ENCODE measurements at regions of chr22 and their contacts with region 1.

Region 1: DNA sequence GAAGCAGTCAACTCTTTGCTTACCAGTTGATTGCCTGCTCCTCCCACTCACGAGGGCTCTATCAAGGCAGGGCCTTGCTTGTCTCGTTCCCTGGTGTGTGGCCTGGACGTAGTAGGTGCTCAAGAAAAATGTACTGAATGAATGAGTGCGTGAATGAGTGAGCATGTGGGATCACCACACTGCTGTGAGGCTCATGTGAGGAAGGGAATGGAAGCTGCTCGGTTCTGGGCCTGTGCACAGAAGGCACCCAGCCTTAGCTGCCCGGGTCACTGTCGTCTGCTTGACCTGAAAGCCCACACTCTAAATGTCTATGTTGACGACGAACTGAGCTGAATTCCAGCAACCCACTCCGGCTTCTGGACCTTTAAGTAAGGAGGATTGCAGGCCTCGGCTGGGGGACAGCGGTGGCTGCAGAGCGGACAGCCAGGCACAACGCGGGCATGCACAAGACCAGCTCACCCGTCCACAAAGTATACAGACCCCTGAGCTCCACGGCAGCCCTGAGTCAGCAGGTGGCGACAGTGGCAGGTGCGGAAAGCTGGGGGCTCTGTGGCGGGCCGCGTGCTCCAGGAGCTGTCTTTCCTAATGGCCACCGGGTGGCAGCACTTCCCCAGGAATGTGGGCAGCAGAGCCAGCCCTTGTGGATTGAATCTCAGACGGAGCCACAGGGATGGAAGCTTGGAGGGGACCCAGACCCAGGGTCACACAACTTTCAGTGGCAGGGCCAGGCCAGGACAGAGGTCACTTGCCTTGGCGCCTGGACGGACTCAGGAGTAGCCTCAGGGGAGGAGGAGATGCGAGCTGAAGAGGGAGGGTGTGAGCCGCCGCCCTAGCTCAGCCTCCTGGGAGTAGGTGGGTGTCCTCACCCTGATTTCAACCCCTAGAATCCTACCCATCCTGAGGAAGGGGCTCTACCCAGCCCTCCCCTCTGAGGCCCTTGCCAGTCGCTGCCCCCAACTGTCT is 5.0 kb upstream of the PICK1 start:
- DNase-seq: peak; percentile 84 to 86
- H3K4me3 ChIP-seq: no peak overlapping the region
- H3K4me3 Mint-ChIP-seq: no peak overlapping the region
- H3K27ac Mint-ChIP-seq: no peak overlapping the region
- H3K4me1 ChIP-seq: no peaks in the 10 kb centered on the region
- H3K4me1 Mint-ChIP-seq: no peaks in the 10 kb centered on the region
- H3K27me3 ChIP-seq: no peaks in the 10 kb centered on the region
- H3K27me3 Mint-ChIP-seq: peaks cover 2% of the 10 kb centered on the region
- CTCF ChIP-seq: peak; percentile 90 to 97

Region 2: DNA sequence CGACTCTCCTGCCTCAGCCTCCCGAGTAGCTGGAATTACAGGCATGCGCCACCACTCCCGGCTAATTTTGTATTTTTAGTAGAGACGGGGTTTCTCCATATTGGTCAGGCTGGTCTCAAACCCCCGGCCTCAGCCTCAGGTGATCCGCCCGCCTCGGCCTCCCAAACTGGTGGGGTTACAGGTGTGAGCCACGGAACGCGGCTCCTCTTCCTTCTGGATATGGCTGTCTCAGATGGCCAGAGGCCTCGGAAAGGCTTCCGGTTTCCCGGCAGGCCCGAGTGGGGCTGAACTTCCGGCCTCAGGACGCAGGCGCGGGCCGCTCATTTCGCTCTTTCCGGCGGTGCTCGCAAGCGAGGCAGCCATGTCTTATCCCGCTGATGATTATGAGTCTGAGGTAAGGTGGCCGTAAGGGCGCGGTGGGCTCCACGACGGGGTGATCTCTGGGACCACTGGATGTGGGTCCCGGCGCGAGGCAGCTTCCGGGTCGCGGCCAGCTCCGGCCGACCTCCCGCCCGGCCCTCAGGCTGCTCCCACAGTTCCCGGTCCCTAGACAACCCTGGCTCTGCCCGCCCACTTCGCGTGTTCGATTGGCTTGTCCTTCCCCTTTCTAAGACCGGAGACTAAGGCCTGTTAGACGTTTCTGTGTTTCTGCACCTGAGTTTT is 203.0 kb before region 1 on chr22 and contains the start of gene EIF3L:
- CTCF ChIA-PET with region 1: no interaction called
- POLR2A ChIA-PET with region 1: no interaction called
- intact Hi-C with region 1: no loop called
- DNase-seq: peak; percentile 89 to 92
- H3K4me3 ChIP-seq: peak within 1 kb of the TSS; percentile 77
- H3K4me3 Mint-ChIP-seq: peak within 1 kb of the TSS; percentile 95
- H3K27ac Mint-ChIP-seq: peak within 1 kb of the TSS; percentile 91
- H3K4me1 ChIP-seq: no peaks in the 10 kb centered on the region
- H3K4me1 Mint-ChIP-seq: peaks cover 7% of the 10 kb centered on the region
- H3K27me3 ChIP-seq: no peaks in the 10 kb centered on the region
- H3K27me3 Mint-ChIP-seq: no peaks in the 10 kb centered on the region
- CTCF ChIP-seq: no peak
- total RNA-seq, gene EIF3L: 524 and 554 TPM in 2 replicates

Region 3: DNA sequence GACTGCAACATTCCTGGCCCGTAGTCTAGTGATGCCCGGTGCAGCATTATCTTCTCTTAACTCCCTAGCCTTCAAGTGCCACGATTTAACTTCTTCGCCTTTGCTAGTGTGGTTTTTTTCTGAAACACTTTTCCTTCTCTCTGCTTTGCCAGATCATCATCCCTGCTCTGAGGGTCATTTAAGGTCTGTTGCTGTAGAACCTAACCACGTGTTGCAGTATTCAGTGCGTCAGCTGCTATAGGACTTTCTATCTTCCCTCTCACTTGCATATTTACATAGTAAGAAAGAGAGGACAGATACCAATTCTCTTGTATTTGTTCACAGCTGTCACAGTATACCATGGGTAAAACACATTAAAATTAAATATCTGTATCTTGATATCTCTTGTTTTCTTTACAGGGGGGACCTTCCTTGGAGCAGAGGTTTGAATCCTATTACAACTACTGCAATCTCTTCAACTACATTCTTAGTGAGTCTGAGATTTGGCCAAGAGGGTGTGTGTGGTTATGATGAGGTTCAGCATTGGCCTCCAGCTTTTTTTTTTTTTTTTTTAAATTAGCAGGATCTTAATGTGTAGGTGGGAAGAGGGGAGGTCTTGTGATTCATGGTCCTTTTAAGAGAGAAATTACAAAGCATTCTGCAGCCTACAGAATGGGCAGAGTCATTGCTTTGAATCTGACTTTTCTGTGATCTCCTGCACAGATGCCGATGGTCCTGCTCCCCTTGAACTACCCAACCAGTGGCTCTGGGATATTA is 189.4 kb before region 1 on chr22:
- CTCF ChIA-PET with region 1: interaction called, 11 read pairs
- POLR2A ChIA-PET with region 1: no interaction called
- intact Hi-C with region 1: no loop called
- DNase-seq: no peak
- H3K4me3 ChIP-seq: no peak overlapping the region
- H3K4me3 Mint-ChIP-seq: no peak overlapping the region
- H3K27ac Mint-ChIP-seq: no peak overlapping the region
- H3K4me1 ChIP-seq: no peaks in the 10 kb centered on the region
- H3K4me1 Mint-ChIP-seq: peaks cover 14% of the 10 kb centered on the region
- H3K27me3 ChIP-seq: no peaks in the 10 kb centered on the region
- H3K27me3 Mint-ChIP-seq: no peaks in the 10 kb centered on the region
- CTCF ChIP-seq: no peak

Region 4: DNA sequence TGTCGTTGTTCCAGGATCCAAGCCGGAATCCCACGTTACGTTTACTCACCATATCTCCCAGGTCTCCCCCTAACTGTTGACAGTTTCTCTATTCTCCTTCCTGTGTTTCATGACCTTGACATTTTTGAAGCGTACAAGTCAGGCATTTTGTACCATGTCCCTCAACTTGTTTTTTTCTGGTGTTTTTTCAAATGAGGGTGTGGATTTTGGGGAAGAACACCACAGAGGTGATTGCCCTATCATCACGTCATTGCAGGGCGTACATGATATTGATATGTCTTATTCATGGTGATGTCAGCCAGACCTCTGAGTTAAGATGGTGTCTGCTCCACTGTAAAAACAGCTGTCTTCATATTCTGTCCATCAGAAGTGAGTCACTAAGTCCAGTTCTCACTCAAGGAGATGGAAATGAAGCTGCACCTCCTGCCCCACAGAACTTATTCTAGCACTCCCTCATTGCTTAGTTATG is 39.5 kb before region 1 on chr22:
- CTCF ChIA-PET with region 1: no interaction called
- POLR2A ChIA-PET with region 1: no interaction called
- intact Hi-C with region 1: no loop called
- DNase-seq: no peak
- H3K4me3 ChIP-seq: no peak overlapping the region
- H3K4me3 Mint-ChIP-seq: no peak overlapping the region
- H3K27ac Mint-ChIP-seq: no peak overlapping the region
- H3K4me1 ChIP-seq: no peaks in the 10 kb centered on the region
- H3K4me1 Mint-ChIP-seq: no peaks in the 10 kb centered on the region
- H3K27me3 ChIP-seq: no peaks in the 10 kb centered on the region
- H3K27me3 Mint-ChIP-seq: no peaks in the 10 kb centered on the region
- CTCF ChIP-seq: no peak

Region 5: DNA sequence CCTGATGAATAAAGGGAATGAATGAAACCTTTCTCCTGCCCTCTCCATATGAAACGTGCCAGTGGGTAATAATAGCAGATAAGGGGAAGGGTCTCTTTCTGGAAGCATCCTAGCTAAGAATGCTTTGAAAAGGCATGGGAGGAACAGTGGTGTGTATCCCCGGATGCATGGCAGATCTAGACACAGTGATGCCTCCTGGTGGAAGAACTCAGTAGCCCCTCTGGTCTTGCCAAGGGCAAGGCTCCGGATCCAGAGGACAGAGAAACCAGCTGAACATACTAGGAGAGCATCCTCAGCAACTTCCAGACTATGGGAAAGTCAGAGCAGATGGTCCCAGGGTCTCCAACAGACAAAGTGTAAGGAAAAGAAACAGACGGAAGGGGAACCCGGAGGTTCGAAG is 51.9 kb after region 1 on chr22:
- CTCF ChIA-PET with region 1: interaction called, 7 read pairs
- POLR2A ChIA-PET with region 1: no interaction called
- intact Hi-C with region 1: loop called (anchors 2 kb)
- DNase-seq: no peak
- H3K4me3 ChIP-seq: no peak overlapping the region
- H3K4me3 Mint-ChIP-seq: no peak overlapping the region
- H3K27ac Mint-ChIP-seq: no peak overlapping the region
- H3K4me1 ChIP-seq: peaks cover 16% of the 10 kb centered on the region
- H3K4me1 Mint-ChIP-seq: peaks cover 9% of the 10 kb centered on the region
- H3K27me3 ChIP-seq: no peaks in the 10 kb centered on the region
- H3K27me3 Mint-ChIP-seq: no peaks in the 10 kb centered on the region
- CTCF ChIP-seq: peak; percentile 17 to 27

Region 6: DNA sequence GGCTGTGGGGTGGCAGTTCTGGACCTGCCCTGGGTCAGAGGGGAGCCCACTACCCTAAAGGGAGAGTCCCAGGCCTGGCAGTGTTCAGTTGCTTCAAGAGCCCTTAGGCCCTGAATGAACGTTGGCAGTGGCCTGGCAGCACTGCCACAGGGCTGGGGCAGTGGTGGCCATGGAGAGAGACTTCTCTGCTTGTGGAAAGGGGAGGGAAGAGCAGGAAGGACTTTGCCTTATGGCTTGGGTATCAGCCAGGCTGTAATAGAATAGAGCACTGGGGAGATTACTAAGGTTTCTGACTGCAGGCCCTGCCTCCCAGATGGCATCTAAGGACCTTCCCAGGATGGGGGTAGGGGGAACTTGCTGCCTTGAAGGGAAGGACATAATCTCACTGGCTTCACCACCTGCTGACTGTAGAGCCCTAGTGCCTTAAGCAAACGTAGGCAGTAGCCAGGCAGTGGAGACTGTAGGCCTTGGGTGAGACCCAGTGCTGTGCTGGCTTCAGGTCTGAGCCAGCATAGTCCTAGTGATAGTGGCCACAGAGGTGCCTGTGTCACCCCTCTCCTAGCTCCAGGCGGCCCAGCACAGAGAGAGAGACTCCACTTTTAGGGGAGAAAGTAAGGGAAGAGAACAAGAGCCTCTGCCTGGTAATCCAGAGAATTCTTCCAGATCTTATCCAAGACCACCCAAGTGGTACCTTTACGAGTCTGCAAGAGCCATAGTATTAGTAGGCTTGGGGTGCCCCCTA is 101.8 kb after region 1 on chr22:
- CTCF ChIA-PET with region 1: no interaction called
- POLR2A ChIA-PET with region 1: interaction called, 3 read pairs
- intact Hi-C with region 1: loop called (anchors 1 kb)
- DNase-seq: no peak
- H3K4me3 ChIP-seq: no peak overlapping the region
- H3K4me3 Mint-ChIP-seq: no peak overlapping the region
- H3K27ac Mint-ChIP-seq: no peak overlapping the region
- H3K4me1 ChIP-seq: 0 out of 2 replicates have a peak, but pooled peaks cover 6% of the 10 kb centered on the region
- H3K4me1 Mint-ChIP-seq: no peaks in the 10 kb centered on the region
- H3K27me3 ChIP-seq: no peaks in the 10 kb centered on the region
- H3K27me3 Mint-ChIP-seq: no peaks in the 10 kb centered on the region
- CTCF ChIP-seq: no peak

Region 7: DNA sequence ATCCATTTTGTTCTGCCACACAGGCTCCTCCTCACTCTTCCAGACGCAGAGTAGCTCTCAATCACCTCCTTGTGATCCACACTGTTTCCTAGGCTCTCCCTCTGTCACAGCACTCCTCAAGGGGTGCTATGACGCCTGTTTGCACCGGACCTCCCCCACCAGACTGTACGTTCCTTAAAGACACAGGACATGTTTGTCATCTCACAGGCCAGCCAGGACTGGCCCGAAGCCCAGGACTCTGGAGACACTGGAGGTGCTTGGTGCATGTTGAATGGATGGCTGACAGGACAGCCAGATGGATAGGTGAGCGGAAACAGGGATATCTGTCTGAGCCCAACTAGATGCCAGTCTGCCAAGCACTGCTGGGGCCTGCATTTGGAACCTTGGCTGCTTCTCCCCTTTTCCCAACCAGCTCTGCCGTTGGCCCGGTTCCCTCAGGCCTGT is 115.8 kb after region 1 on chr22:
- CTCF ChIA-PET with region 1: no interaction called
- POLR2A ChIA-PET with region 1: no interaction called
- intact Hi-C with region 1: no loop called
- DNase-seq: no peak
- H3K4me3 ChIP-seq: no peak overlapping the region
- H3K4me3 Mint-ChIP-seq: no peak overlapping the region
- H3K27ac Mint-ChIP-seq: peak overlapping the region; percentile 12
- H3K4me1 ChIP-seq: peaks cover 24% of the 10 kb centered on the region
- H3K4me1 Mint-ChIP-seq: peaks cover 13% of the 10 kb centered on the region
- H3K27me3 ChIP-seq: no peaks in the 10 kb centered on the region
- H3K27me3 Mint-ChIP-seq: no peaks in the 10 kb centered on the region
- CTCF ChIP-seq: no peak

Region 8: DNA sequence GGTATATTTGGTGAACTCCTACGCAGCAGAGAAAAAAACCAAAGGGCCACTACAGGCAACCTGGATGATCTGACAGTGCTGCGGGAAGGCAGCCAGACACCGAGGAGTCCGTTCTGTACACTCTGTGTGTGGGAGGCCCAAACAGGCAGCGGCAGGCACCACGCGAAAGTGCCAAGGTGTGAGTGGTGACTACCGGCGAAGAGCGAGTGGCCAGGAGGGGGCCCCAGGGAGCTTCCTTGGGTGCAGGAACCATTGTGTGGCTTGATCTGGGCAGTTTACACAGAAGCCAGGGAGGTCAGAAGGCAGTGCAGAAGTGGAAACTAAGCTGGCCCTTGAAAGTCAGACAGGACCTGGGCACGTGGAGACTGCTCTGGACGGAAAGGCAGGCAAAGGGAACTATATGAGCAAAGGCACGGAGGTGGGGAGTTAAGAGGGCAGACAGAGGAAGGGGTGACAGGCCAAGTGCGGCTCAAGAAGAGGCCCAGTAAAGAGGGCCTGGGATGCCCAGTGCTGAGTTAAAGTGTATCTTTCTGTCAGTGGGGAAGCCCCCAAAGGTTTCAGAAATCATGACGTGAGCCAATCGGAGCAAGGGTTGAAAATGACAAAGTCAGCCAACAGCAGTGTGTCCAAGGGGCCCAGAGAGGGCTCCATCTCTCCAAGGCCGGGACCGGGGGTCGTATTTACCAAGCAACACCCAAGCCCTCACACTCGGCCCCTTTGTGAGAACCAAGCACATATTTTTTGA is 210.0 kb after region 1 on chr22:
- CTCF ChIA-PET with region 1: no interaction called
- POLR2A ChIA-PET with region 1: no interaction called
- intact Hi-C with region 1: no loop called
- DNase-seq: peak; percentile 49 to 54
- H3K4me3 ChIP-seq: no peak overlapping the region
- H3K4me3 Mint-ChIP-seq: no peak overlapping the region
- H3K27ac Mint-ChIP-seq: peak overlapping the region; percentile 14
- H3K4me1 ChIP-seq: no peaks in the 10 kb centered on the region; the same call in 1 of the 2 replicates
- H3K4me1 Mint-ChIP-seq: peaks cover 7% of the 10 kb centered on the region
- H3K27me3 ChIP-seq: no peaks in the 10 kb centered on the region
- H3K27me3 Mint-ChIP-seq: no peaks in the 10 kb centered on the region
- CTCF ChIP-seq: peak; percentile 37 to 57

Region 9: GRCh38 chr22:38353142-38353629 is 301.0 kb after region 1 on chr22:
- CTCF ChIA-PET with region 1: interaction called, 9 read pairs
- POLR2A ChIA-PET with region 1: no interaction called
- intact Hi-C with region 1: loop called (anchors 1 kb)
- DNase-seq: peak in 1 of 2 experiments; percentile 83
- H3K4me3 ChIP-seq: no peak overlapping the region
- H3K4me3 Mint-ChIP-seq: no peak overlapping the region
- H3K27ac Mint-ChIP-seq: no peak overlapping the region
- H3K4me1 ChIP-seq: 0 out of 2 replicates have a peak, but pooled peaks cover 5% of the 10 kb centered on the region
- H3K4me1 Mint-ChIP-seq: no peaks in the 10 kb centered on the region
- H3K27me3 ChIP-seq: no peaks in the 10 kb centered on the region
- H3K27me3 Mint-ChIP-seq: no peaks in the 10 kb centered on the region
- CTCF ChIP-seq: peak; percentile 73 to 94

Region 10: GRCh38 chr22:38569972-38570778 is 518.0 kb after region 1 on chr22 and contains the start of gene DMC1:
- CTCF ChIA-PET with region 1: interaction called, 5 read pairs
- POLR2A ChIA-PET with region 1: no interaction called
- intact Hi-C with region 1: loop called (anchors 1 kb)
- DNase-seq: peak; percentile 92 to 96
- H3K4me3 ChIP-seq: peak within 1 kb of the TSS; percentile 92
- H3K4me3 Mint-ChIP-seq: peak within 1 kb of the TSS; percentile 87
- H3K27ac Mint-ChIP-seq: peak within 1 kb of the TSS; percentile 82
- H3K4me1 ChIP-seq: peaks cover 5% of the 10 kb centered on the region; the same call in 1 of the 2 replicates
- H3K4me1 Mint-ChIP-seq: peaks cover 11% of the 10 kb centered on the region
- H3K27me3 ChIP-seq: no peaks in the 10 kb centered on the region
- H3K27me3 Mint-ChIP-seq: no peaks in the 10 kb centered on the region
- CTCF ChIP-seq: no peak
- total RNA-seq, gene DMC1: 1.1 and 1.2 TPM in 2 replicates

Measured in Caco-2 (cell line).